Posterior vena cava (tissue), 2 donors: ENCODE measurements at regions of chr5 and their contacts with region 1.

Region 1: DNA sequence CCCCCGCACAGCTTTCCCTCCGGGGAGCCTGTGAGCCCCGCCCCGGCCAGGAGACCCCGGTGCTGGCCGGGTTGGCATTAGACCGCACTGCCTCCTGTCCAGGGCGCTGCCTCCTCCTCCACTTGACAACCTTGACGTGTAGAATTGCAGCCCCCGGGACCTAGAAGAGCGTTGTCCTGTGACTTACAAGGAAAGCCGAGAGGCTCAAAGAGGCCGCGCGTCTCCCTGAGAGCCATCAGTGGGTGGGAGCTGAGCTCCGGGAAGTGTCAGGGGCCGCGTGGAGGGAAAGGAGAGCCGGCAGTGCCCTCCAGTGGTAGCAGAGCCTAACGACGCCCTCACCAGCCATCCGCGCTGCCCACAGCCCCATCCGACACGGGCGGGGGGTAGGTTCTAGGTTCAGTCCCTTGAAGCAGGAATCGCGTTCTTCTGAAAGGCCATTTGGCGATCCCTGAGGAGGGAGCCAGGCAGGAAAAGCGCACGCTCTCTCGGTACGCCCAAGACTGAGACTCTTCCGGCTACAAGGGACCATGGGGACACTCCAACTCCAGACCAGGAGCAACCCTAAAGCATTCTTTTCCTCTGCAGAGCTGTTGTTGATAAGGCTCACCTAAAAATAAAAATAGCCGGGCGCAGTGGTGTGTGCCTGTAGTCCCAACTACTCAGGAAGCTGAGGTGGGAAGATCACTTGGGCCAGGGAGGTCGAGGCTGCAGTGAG is 40.6 kb upstream of the SAP30L start:
- DNase-seq: peak; percentile 95

Region 2: DNA sequence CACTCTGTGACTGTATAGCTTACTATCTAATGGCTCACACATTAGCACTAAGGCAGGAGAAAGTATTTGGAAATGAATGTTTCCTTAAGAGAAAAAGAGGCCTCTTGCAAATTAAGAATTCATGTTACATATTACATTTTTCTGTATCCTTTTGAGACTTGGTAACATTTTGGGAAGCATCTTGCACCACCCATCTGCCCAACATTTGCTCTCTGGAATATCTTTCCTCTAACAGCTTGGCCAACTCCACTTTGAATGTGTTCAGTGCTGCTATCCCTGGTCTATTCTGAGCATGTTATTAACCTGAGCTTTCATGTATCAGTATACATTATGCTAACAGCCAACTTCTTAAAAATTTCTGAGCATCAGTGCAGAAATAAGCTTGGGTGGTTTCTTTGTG is 339.3 kb before region 1 on chr5:
- intact Hi-C with region 1: loop called (anchors 5 kb)
- DNase-seq: no peak

Region 3: DNA sequence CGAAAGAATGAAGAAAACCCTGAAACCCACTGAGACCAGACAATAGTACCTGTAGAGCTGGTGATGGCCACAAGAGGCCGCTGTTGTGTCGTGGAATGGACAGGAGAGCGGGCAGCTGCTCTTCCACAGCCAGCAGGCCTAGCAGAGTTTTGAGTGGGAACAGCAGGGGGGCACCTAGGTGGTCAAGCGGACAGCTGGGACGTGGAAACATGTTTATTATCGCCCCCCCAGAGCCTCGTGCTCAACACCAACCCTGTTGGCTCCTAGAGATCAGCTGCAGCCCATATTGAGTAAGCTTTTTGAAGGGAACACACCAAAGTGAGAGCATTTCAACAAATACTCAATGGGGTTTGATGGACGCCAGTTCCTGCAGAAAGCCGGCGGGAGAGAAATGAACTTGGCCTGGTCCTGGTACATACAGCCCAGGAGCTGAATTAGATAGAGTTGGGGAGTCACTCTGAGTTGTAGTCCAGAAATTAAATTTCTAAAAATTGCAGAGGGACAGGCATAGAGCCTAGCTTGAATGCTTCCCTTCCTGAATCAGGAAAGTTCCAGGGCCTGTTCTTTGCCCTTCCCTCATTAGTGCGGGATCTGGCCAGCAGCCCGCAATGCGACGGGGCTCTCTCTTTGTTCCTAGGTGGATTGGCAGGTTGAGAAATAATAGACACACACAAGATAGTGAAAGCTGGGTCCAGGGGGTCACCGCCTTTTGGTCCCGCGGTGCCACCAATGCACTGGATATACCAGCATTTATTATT is 332.6 kb before region 1 on chr5:
- intact Hi-C with region 1: loop called (anchors 5 kb)
- DNase-seq: peak; percentile 95

Region 4: GRCh38 chr5:154077696-154078095 is 327.5 kb before region 1 on chr5:
- intact Hi-C with region 1: loop called (anchors 5 kb)
- DNase-seq: no peak

Region 5: DNA sequence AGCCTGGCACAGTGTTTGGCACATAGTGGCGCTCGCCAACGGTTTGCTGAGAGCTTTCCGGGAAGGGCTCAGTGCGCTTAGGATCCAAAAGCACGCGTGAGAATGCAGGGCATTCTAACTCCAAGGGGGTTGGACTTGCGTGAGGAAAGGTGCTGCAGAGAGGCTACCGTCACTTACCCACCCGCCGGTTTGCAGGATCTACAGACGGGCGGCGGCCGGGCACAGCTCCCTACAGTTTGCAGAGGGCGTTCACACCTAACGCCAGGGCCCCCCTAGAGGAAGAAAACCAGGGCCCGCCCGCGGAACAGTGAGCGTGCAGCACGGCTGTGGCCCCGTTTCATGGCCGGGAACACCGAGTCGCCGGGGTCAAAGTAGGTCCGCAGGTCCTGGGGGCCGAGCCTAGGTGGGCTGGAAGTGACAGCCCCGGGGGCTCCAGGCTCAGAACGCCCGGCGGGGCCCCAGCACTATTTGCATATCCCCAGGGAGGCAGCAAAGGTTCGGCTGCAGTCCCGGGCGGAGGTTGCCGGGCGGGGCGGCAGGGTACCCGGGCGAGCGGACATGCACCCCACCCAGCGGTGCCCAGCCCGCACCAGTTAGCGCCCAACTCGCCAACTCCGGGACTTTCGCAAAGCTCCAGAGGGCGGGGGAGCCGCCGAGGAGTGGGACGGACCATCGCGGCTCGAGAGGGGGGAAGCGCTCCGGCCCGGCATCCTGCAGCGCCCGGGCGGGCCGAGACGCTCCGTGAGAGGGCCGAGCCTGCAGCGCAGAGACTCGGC is 215.2 kb before region 1 on chr5:
- intact Hi-C with region 1: loop called (anchors 10 kb)
- DNase-seq: peak; percentile 96

Region 6: DNA sequence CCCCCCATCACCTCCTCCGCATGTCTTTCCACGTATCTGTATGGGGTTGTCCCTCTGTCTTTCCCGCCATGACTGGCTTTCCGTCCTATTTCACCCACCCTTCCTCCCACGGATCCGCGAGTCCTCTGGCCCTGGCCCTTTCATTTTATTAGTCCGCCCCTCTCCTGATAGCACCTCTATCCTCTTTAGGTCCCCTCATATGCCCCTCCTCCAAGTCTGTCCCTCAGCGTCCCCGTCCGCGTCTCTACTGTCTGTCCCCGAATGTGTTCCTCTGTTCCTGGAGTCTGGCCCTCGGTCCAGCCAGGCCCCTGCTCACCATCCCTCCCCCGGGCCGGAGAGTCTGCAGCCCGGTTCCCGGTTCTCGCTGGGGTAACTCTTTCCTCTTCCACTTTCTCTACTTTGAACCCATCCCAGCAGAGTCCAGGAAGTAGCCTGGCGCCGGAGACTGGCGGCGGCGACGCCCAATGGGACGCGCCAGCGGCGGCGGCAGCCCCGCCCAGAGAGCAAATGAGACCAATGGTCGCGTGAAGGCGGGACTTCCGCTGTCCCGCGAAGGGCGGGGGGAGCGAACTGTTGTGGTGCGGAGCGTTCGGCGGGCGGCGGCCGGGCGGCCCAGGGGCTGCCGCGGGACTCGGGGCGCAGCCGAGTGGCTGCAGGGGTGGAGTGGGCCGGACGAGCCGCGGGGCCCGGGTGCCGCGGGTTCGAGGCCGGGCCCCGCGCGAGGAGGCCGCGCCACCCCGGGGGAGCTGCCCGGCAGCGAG is 40.4 kb after region 1 on chr5 and contains the start of gene SAP30L:
- intact Hi-C with region 1: no loop called
- DNase-seq: peak; percentile 98
- total RNA-seq, gene SAP30L: 34.6 to 50.5 TPM